GM12878 (cell line): ENCODE measurements at regions of chr7 and their contacts with region 1.

Region 1: GRCh38 chr7:137820677-137821420 is 25.9 kb downstream of the DGKI start:
- DNase-seq: no peak
- ATAC-seq: peak; percentile 91
- H3K4me3 ChIP-seq: no peak overlapping the region
- H3K27ac ChIP-seq: no peak overlapping the region
- H3K4me1 ChIP-seq: peaks cover 6% of the 10 kb centered on the region
- H3K27me3 ChIP-seq: no peaks in the 10 kb centered on the region
- CTCF ChIP-seq: no peak
- EP300 ChIP-seq: no peak; a peak in 1 of 4 replicates
- POLR2A ChIP-seq: no peak
- RAD21 ChIP-seq: no peak

Region 2: GRCh38 chr7:137789215-137789882 is 31.5 kb before region 1 on chr7:
- CTCF ChIA-PET with region 1: interaction called, 3 read pairs
- POLR2A ChIA-PET with region 1: interaction called, 7 read pairs
- RAD21 ChIA-PET with region 1: interaction called, 3 read pairs
- SMC1A ChIA-PET with region 1: interaction called, 10 read pairs
- in situ Hi-C with region 1: no loop called
- intact Hi-C with region 1: no loop called
- DNase-seq: no peak
- ATAC-seq: no peak
- H3K4me3 ChIP-seq: no peak overlapping the region
- H3K27ac ChIP-seq: no peak overlapping the region
- H3K4me1 ChIP-seq: no peaks in the 10 kb centered on the region
- H3K27me3 ChIP-seq: no peaks in the 10 kb centered on the region
- CTCF ChIP-seq: no peak
- EP300 ChIP-seq: no peak
- POLR2A ChIP-seq: no peak
- RAD21 ChIP-seq: no peak

Region 3: DNA sequence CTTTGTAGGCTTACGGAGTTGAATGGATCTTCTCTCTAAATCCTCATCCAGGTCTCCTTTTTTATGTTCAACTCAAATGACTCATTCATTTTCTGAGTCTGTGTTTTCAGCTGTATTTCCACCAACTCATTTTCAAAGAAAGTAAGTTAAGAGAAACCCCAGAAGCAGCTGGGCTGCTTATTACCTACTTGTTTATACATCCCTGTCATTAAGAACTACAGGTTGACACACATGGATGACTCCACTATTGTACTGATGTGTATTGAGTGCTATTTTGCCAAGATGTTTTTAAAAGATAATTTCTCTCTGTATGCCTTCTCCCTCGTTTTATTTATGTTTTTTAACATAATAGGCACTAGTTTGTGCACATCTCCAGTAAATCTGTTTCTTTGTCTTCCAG is 16.0 kb before region 1 on chr7:
- CTCF ChIA-PET with region 1: interaction called, 9 read pairs
- POLR2A ChIA-PET with region 1: interaction called, 6 read pairs
- RAD21 ChIA-PET with region 1: interaction called, 11 read pairs
- SMC1A ChIA-PET with region 1: interaction called, 103 read pairs
- in situ Hi-C with region 1: no loop called
- intact Hi-C with region 1: no loop called
- DNase-seq: no peak
- ATAC-seq: peak; percentile 67
- H3K4me3 ChIP-seq: no peak overlapping the region
- H3K27ac ChIP-seq: no peak overlapping the region
- H3K4me1 ChIP-seq: no peaks in the 10 kb centered on the region
- H3K27me3 ChIP-seq: no peaks in the 10 kb centered on the region
- CTCF ChIP-seq: no peak
- EP300 ChIP-seq: no peak
- POLR2A ChIP-seq: no peak
- RAD21 ChIP-seq: no peak

Region 4: DNA sequence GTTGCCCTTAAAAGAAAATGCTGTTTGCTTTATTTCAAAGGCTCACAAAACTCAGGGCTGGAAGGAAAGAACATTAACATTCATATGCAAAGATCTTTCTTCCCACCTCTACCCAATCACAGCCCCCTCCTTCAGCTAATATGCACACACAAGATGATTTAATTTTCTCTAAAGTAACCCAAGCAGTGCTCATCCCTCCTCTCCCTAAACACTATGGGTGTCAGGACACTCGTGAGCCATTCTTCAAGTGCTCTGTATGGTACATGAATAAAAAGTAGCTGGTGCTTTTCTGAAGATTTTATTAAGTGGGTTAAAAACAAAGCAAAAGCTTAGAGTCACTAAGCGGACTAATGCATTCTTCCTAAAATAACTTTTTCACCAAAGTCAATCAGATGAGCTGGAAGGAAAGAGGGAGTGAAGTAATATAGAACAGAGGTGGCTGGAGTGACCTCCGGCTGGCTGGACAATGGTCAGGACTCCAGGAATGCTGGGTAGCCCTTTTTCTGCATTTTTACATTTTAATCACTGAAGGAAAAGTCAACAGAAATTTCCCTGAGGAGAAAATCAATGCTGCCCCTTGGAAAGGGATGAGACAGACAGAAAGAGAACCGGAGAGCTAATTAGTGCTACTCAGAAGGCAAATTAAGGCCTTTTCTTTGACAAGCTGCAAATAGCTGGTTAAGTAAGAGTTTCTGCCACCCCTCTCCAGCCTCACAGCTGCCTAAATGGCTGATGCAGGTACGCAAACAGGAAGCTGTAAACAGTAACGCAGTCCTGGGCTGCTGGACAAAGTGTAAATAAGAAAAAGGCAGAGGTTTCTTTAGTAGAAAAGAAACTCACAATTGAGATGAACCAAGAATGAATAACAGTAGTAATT is 19.3 kb after region 1 on chr7:
- CTCF ChIA-PET with region 1: interaction called, 17 read pairs
- POLR2A ChIA-PET with region 1: interaction called, 24 read pairs
- RAD21 ChIA-PET with region 1: interaction called, 109 read pairs
- SMC1A ChIA-PET with region 1: interaction called, 281 read pairs
- in situ Hi-C with region 1: no loop called
- intact Hi-C with region 1: no loop called
- DNase-seq: no peak
- ATAC-seq: 0 out of 3 replicates have a peak, but pooled peaks have one; percentile 11
- H3K4me3 ChIP-seq: no peak overlapping the region
- H3K27ac ChIP-seq: no peak overlapping the region
- H3K4me1 ChIP-seq: no peaks in the 10 kb centered on the region
- H3K27me3 ChIP-seq: peaks cover 0 to 2% of the 10 kb centered on the region in 2 experiments; a peak in 2 of 4 replicates
- CTCF ChIP-seq: no peak
- EP300 ChIP-seq: no peak
- POLR2A ChIP-seq: no peak
- RAD21 ChIP-seq: no peak

Region 5: GRCh38 chr7:138008547-138009349 is 187.9 kb after region 1 on chr7:
- CTCF ChIA-PET with region 1: interaction called, 13 read pairs
- POLR2A ChIA-PET with region 1: no interaction called
- RAD21 ChIA-PET with region 1: interaction called, 3 read pairs
- SMC1A ChIA-PET with region 1: interaction called, 6 read pairs
- in situ Hi-C with region 1: no loop called
- intact Hi-C with region 1: loop called (anchors 5 kb)
- DNase-seq: no peak
- ATAC-seq: peak; percentile 86
- H3K4me3 ChIP-seq: no peak overlapping the region
- H3K27ac ChIP-seq: no peak overlapping the region
- H3K4me1 ChIP-seq: no peaks in the 10 kb centered on the region
- H3K27me3 ChIP-seq: no peaks in the 10 kb centered on the region
- CTCF ChIP-seq: peak; percentile 80 to 84 (median 80)
- EP300 ChIP-seq: no peak; a peak in 1 of 4 replicates
- POLR2A ChIP-seq: no peak
- RAD21 ChIP-seq: peak; percentile 100

Region 6: DNA sequence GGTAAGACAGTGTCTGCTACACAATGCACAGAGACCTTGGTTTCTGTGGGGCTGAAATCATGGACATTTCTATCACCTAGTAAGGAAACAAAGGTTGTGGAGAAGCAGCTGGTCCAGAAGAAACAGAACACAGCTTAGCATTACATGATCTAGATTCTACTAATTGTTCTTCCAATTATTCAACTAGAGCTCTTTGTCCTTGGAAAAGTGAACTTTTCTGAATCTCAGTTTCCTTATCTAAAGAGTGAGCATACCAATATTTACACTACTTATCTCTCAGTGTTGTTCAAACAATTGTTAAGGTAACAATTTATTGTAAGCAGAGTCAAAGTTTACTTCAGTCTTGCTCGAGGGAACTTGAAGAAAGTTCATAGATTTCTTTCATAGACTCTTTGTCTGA is 596.9 kb after region 1 on chr7:
- CTCF ChIA-PET with region 1: no interaction called
- POLR2A ChIA-PET with region 1: no interaction called
- RAD21 ChIA-PET with region 1: no interaction called
- SMC1A ChIA-PET with region 1: no interaction called
- in situ Hi-C with region 1: no loop called
- intact Hi-C with region 1: no loop called
- DNase-seq: no peak
- ATAC-seq: no peak
- H3K4me3 ChIP-seq: no peak overlapping the region
- H3K27ac ChIP-seq: no peak overlapping the region
- H3K4me1 ChIP-seq: no peaks in the 10 kb centered on the region
- H3K27me3 ChIP-seq: no peaks in the 10 kb centered on the region
- CTCF ChIP-seq: no peak
- EP300 ChIP-seq: no peak
- POLR2A ChIP-seq: no peak
- RAD21 ChIP-seq: no peak